Heart left ventricle (tissue), 16 donors: ENCODE measurements at regions of chr17 and their contacts with region 1.

Region 1: DNA sequence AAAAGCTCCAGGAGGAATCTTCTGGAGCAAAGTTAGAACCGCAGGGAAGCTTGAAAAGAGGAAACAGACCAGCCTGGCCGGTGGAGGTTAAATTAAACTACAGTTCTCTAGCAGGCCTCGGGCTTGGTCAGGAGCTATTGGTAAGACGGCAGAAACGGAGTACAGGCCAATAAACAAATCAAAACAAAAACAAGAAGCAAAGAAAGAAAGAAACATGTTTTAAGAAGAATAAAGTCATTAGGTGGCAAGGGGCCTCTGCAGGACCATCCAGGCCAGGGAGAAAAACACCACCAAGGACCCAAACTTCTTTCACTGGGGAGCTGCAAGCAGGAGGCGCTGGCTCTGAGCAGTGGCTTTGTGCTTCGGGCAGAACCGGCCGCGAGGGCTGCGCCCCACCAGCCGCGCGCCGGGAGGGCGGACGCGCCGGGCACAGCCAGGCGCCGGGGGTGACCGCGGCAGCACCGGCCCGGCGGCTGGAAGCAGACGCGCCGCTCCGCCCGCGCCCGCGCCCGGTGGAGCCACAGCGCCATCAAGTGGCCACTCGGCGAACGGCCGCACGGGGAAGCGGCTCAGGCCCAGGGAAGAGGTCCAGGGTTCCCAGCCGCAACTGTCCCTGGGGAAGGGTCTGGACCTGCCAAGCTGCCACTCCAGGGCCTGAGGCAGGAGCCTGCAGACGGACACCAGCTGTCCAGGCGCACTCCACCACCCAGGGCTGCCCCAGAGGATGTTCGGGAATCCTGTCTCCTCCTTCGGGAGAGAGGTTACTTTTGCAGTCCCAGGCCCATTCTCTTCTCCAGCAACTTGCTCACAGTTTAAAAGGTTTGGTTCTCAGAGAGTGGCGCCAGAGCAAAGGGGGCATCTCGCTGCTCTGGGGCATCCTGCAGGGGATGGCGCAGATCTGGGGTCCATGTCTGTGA is 419.4 kb downstream of the SOX9 start:
- DNase-seq: peak; percentile 61 to 90 (median 71)
- ATAC-seq: peak; percentile 87 to 99 (median 92)
- H3K4me3 ChIP-seq: peak overlapping the region in 7 of 12 donors; percentile 6 to 51 (median 33)
- H3K27ac ChIP-seq: peak overlapping the region in 2 of 12 donors; percentile 47 to 57
- H3K4me1 ChIP-seq: peaks cover 0 to 10% (median 3%) of the 10 kb centered on the region in 12 donors
- H3K27me3 ChIP-seq: peaks cover 0 to 8% (median 0%) of the 10 kb centered on the region in 9 donors
- CTCF ChIP-seq: peak; percentile 71 to 99 (median 86)
- POLR2A ChIP-seq: no peak

Region 2: DNA sequence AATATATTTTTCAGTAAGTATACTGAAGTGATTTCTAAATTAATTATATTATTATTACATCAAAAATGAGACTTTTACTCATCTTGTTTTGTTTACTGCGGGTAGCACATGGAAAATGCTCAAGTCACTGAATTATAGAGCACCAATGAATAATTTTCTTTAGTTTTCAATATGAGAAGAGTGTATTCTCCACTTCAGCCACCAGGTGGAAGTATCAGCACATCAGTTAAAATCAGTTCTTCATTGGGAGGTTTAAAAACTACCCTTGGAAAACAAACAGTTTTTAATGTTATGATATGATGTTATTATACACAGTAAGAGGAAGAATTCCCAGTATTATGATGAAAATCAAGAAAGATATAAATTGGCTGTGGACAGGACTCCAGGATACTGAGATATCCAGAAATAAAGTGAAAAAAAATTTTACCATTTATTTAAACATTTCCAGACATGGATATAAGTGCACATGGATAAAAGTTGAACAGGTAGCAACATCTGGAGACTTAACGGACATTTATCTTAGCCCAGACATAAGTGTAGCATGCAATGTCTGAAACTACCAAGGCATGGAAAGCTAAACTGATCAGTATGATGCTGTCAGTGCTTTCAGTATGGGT is 1903.6 kb before region 1 on chr17:
- intact Hi-C with region 1: loop called in 9 of 10 experiments (anchors 2 to 5 kb)
- DNase-seq: no peak
- ATAC-seq: no peak
- H3K4me3 ChIP-seq: no peak overlapping the region
- H3K27ac ChIP-seq: no peak overlapping the region
- H3K4me1 ChIP-seq: no peaks in the 10 kb centered on the region
- H3K27me3 ChIP-seq: no peaks in the 10 kb centered on the region
- CTCF ChIP-seq: peak; percentile 61 to 82 (median 76)
- POLR2A ChIP-seq: no peak

Region 3: DNA sequence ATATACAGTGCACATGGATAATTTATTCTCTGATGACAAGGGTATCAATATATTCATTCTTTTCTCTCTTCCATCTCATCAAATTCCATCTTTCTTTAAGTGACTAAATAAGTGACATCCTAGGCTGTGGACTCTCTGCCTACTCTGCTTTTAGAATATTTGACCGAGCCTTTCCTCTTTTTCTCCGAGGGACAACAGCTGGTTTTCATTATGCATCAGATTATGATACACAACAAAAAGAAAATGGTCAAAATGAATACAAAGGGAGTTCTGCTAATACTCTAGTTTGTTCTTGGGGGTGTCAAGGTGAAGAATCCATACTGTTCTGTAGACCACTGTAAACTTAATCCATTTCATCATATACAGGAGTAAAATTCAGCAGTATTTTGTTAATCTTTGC is 1428.3 kb before region 1 on chr17:
- intact Hi-C with region 1: loop called in 6 of 10 experiments (anchors 2 to 5 kb)
- DNase-seq: no peak
- ATAC-seq: no peak
- H3K4me3 ChIP-seq: no peak overlapping the region
- H3K27ac ChIP-seq: no peak overlapping the region
- H3K4me1 ChIP-seq: no peaks in the 10 kb centered on the region
- H3K27me3 ChIP-seq: peaks cover 0 to 6% (median 0%) of the 10 kb centered on the region in 9 donors
- CTCF ChIP-seq: no peak
- POLR2A ChIP-seq: no peak

Region 4: DNA sequence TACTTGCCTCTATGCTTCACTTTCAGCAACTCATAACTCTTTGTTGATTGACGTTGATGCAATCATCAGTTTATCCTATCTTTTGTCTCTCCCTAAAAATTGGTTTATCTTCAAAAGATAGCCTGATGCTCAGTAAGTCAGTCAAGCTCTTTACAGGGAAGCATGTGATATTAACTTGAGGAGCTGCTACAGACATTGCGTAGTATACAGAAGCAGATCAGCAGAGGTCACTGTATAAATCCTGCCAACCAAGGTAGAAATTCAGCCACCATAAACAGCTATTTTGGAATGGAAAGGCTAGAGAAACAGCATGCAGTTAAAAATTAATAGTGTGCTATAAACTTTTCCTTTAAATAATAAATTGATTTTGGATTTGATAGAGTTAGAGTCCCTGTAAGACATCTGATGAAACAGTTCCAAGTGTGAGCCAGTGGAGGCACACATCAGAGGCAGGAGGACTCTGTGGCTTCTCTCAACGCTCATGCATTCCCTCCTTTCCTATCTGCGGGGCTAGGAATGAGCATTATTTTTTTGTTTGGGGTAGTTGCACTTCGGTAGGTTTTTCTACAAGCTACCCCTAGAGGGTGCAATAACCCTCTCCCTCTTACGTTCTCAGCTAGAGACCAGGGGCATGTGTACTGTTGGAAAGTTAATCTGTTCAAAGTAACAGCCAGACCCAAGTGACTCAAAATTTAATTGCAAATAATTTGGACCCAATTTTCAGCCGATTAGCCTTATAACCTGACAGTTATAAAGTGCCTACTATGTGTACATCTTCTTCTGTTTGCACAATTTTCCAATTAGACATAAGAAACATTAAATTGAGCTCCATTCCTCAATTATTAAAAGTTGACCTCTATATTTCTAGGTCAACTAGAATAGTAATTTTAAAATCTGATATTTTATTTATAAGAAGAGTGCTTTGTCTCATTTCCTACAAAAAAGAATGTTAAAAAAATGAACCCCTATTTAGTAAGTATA is 1067.1 kb before region 1 on chr17:
- intact Hi-C with region 1: loop called in 9 of 10 experiments (anchors 2 to 10 kb)
- DNase-seq: no peak
- ATAC-seq: peak in 3 of 4 donors; percentile 62 to 75 (median 64)
- H3K4me3 ChIP-seq: no peak overlapping the region
- H3K27ac ChIP-seq: no peak overlapping the region
- H3K4me1 ChIP-seq: no peaks in the 10 kb centered on the region
- H3K27me3 ChIP-seq: no peaks in the 10 kb centered on the region
- CTCF ChIP-seq: peak; percentile 32 to 66 (median 50)
- POLR2A ChIP-seq: no peak

Region 5: DNA sequence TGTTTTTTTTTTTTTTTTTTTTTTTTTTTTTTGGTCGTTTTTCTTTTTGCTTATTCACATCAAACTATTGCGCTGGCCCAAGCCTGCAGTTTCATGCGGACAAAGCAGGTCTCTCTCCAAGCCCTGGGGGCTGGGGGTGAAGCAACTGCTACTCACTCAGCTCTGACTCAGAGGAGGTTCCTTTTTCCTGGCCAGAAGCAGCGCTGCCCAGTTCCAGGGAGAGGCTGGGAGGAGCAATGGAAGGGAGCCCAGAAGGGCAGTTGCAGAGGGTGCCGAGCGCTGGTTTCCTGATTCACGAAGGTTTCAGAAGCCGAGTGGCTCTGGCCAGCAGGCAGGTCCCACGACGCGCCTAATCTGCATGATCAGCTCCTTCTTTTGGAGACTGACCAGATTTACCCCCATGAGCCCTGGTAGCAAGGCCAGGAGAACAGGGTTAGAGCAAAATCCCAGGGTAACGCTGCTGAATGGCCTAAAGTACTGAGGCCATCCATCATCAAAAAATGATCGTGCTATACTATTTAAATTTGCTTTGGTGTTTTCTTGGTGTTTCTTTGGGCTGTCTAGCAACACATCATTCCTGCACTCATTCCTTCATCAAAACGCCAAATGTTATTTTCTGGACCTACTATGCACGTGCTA is 564.1 kb before region 1 on chr17:
- intact Hi-C with region 1: loop called in 1 of 10 experiments (anchors 5 kb)
- DNase-seq: peak; percentile 69 to 89 (median 83)
- ATAC-seq: peak; percentile 93 to 99 (median 97)
- H3K4me3 ChIP-seq: peak overlapping the region in 3 of 12 donors; percentile 34 to 58 (median 48)
- H3K27ac ChIP-seq: peak overlapping the region in 6 of 12 donors; percentile 31 to 80 (median 47)
- H3K4me1 ChIP-seq: peaks cover 0 to 15% (median 0%) of the 10 kb centered on the region in 12 donors
- H3K27me3 ChIP-seq: no peaks in the 10 kb centered on the region
- CTCF ChIP-seq: no peak
- POLR2A ChIP-seq: no peak

Region 6: GRCh38 chr17:72191921-72192799 is 348.1 kb before region 1 on chr17:
- intact Hi-C with region 1: loop called in 1 of 10 experiments (anchors 10 kb)
- DNase-seq: peak in 4 of 5 donors; percentile 45 to 81 (median 62)
- ATAC-seq: peak; percentile 79 to 88 (median 86)
- H3K4me3 ChIP-seq: peak overlapping the region in 1 of 12 donors; percentile 13
- H3K27ac ChIP-seq: peak overlapping the region in 9 of 12 donors; percentile 40 to 76 (median 56)
- H3K4me1 ChIP-seq: peaks cover 0 to 21% (median 0%) of the 10 kb centered on the region in 12 donors
- H3K27me3 ChIP-seq: no peaks in the 10 kb centered on the region
- CTCF ChIP-seq: no peak
- POLR2A ChIP-seq: no peak

Region 7: GRCh38 chr17:72602517-72603419 is 62.5 kb after region 1 on chr17:
- intact Hi-C with region 1: no loop called
- DNase-seq: no peak
- ATAC-seq: no peak
- H3K4me3 ChIP-seq: no peak overlapping the region
- H3K27ac ChIP-seq: no peak overlapping the region
- H3K4me1 ChIP-seq: peaks cover 0 to 9% (median 0%) of the 10 kb centered on the region in 12 donors
- H3K27me3 ChIP-seq: peaks cover 0 to 25% (median 4%) of the 10 kb centered on the region in 9 donors
- CTCF ChIP-seq: no peak
- POLR2A ChIP-seq: no peak